ENCODE measurements at regions of chr18 and their contacts with region 1.

Region 1: DNA sequence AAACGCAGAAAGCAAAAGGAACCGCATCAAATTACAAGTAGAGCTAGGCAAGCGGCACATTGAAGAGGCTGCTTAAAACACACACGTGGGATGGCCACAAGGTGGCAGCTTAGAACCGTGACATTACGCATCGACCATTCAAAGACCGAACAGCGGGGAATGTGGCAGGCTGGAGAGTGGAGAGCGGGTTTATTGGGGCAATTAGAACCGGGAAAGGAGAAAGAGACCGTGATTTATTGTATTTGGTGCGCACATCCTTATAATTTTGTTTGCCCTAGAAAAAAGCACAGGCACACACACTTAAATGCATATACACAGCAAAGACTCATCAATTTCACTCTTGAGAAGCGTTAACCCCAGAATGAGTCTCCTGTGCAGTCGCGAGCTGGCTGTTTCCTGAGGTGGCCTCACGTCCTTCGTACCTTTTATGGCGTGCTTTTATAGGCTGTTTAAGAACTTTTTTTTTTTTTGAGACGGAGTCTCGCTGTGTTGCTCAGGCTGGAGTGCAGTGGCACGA is 31.7 kb upstream of the MEP1B start:
- DNase-seq: peak; percentile 72
- H3K4me3 ChIP-seq: no peak overlapping the region
- H3K27ac ChIP-seq: no peak overlapping the region
- H3K27me3 ChIP-seq: peaks cover 9% of the 10 kb centered on the region
- CTCF ChIP-seq: peak; percentile 92

Region 2: DNA sequence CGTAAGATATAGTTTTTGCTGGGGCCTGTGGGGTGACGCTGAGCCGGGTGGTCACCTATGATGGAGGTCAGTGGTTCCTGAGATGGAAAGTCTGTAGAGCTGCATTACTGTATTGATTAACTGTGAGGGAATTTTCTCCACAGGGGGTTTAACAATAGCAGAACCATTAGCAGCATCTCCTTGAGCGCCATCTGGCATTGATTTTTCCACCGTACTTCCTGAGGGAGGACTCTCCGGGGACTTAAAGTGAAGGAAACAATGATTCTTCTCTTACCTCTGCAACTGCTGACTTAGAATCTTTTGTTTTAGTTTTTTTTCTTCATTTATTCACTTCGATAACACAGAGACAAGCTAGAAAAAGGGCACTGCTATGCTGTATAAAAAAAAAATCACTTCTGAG is 162.2 kb before region 1 on chr18:
- CTCF ChIA-PET with region 1: no interaction called
- POLR2A ChIA-PET with region 1: no interaction called
- DNase-seq: no peak
- H3K4me3 ChIP-seq: no peak overlapping the region
- H3K27ac ChIP-seq: no peak overlapping the region
- H3K27me3 ChIP-seq: no peaks in the 10 kb centered on the region
- CTCF ChIP-seq: no peak

Region 3: GRCh38 chr18:32021756-32022564 is 136.2 kb before region 1 on chr18:
- CTCF ChIA-PET with region 1: no interaction called
- POLR2A ChIA-PET with region 1: no interaction called
- DNase-seq: no peak
- H3K4me3 ChIP-seq: no peak overlapping the region
- H3K27ac ChIP-seq: no peak overlapping the region
- H3K27me3 ChIP-seq: peaks cover 7% of the 10 kb centered on the region
- CTCF ChIP-seq: no peak

Region 4: DNA sequence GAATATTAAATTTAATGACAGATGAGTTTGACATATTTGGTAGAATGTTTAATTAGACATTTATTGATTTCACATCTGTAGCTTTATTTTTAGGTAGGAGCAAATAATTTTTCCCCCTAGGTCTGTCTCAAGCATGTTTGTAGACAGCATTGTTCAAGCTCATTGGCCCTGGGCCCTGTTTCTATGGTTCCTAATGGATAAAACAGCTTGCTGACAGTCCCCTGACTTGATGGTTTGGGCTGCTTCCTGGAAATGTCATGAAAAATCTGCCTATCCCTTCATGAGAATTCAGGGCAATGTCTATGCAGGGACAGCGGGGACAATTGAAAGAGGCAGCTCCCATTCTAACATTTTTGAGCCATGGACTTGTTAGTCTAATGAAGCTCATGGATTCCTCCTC is 17.1 kb after region 1 on chr18:
- CTCF ChIA-PET with region 1: interaction called, 13 read pairs
- POLR2A ChIA-PET with region 1: no interaction called
- DNase-seq: no peak
- H3K4me3 ChIP-seq: no peak overlapping the region
- H3K27ac ChIP-seq: no peak overlapping the region
- H3K27me3 ChIP-seq: no peaks in the 10 kb centered on the region
- CTCF ChIP-seq: no peak